Breast epithelium (tissue), 4 donors: ENCODE measurements at regions of chr10 and their contacts with region 1.

Region 1: GRCh38 chr10:33321513-33321912 is 13.0 kb downstream of the NRP1 start:
- DNase-seq: no peak
- H3K4me3 ChIP-seq: no peak overlapping the region
- H3K27ac ChIP-seq: no peak overlapping the region
- H3K4me1 ChIP-seq: no peaks in the 10 kb centered on the region
- H3K27me3 ChIP-seq: no peaks in the 10 kb centered on the region
- CTCF ChIP-seq: no peak
- POLR2A ChIP-seq: no peak

Region 2: DNA sequence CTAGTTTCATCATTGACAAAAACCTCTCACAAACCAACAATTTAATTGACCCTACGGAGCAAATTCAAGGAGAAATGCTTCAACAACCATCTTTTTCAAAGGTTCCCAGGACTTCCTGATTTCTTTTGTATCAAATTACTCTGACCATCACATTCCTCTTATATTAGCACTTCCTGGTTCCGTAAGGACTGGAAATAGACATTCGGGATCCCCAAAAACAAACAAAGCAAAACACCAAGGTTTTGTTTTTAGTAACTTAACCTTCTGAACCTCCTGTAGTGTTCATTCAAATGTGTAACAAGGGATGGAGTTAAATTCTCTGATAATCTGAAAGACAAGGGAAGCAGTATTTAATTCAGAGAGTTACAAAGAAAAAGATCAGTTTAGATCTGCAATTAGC is 400.6 kb after region 1 on chr10:
- intact Hi-C with region 1: no loop called
- DNase-seq: no peak
- H3K4me3 ChIP-seq: no peak overlapping the region
- H3K27ac ChIP-seq: no peak overlapping the region
- H3K4me1 ChIP-seq: no peaks in the 10 kb centered on the region
- H3K27me3 ChIP-seq: no peaks in the 10 kb centered on the region
- CTCF ChIP-seq: no peak
- POLR2A ChIP-seq: no peak

Region 3: DNA sequence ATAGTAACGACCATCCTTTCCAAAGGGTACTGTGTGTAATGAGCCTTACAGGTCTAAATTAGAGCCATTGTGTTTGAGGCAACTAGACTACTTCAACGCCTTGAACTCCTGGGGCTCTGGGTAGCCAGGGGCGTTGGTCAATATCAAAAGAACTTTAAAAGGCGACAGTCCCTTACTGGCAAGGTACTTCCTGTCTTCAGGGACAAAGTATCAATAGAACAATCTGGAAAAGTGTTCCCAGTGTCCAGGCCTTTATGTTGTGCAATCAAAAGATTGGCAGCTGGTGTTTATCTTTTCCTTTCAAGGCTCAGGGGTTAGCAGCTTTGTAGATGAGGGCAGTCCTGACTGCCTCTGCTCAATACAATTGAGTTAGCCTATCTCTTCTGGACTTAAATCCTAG is 1209.3 kb after region 1 on chr10:
- intact Hi-C with region 1: loop called (anchors 5 kb)
- DNase-seq: no peak
- H3K4me3 ChIP-seq: no peak overlapping the region
- H3K27ac ChIP-seq: no peak overlapping the region
- H3K4me1 ChIP-seq: no peaks in the 10 kb centered on the region
- H3K27me3 ChIP-seq: no peaks in the 10 kb centered on the region
- CTCF ChIP-seq: no peak
- POLR2A ChIP-seq: no peak